B cell (primary cell): ENCODE measurements at regions of chr1 and their contacts with region 1.

Region 1: DNA sequence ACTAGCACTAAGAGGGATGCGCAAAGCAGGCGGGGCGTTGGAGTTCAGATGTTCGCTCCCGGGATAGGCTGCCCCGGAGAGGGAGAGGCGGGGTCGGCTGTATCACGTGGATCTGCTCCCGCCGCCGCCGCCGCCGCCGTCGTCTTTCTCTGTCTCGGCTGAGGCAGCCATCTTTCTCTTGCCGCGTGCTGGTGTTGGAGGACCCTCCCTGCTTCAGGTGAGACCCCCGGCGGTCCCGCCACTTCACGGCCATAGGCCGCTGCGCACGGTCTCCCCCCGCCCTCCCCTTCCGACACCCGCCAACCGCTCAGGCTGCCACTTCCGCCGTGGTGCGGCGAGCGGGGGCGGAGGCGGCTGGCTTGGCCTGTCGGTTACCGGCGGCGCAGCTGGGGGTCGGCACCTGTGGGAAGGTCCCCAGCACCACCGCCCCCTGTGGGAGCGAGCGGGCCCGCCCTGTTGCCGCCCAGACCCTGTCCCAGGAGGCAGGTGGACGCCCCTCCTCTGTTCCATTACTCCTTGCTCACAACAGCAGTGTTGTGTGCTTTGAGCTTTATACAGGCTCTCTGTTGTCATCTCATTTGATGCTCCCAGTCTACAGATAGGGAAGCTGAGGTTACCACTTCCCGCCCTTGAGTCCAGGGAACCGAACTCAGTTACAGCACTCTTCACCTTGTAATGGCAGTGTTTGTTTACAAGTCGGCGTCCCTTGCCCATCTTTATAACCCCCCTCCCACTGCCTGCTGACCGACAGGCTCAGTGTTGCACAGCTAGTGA is at the start of gene BTF3L4:
- DNase-seq: peak; percentile 93
- ATAC-seq: peak; percentile 89
- H3K4me3 ChIP-seq: peak within 1 kb of the TSS; percentile 73 to 99 (median 95)
- H3K4me3 Mint-ChIP-seq: peak within 1 kb of the TSS; percentile 98
- H3K27ac ChIP-seq: peak within 1 kb of the TSS; percentile 85 to 92
- H3K27ac Mint-ChIP-seq: peak within 1 kb of the TSS; percentile 97
- H3K4me1 ChIP-seq: peaks cover 25 to 31% of the 10 kb centered on the region in 2 donors
- H3K4me1 Mint-ChIP-seq: peaks cover 53% of the 10 kb centered on the region
- H3K27me3 ChIP-seq: no peaks in the 10 kb centered on the region
- H3K27me3 Mint-ChIP-seq: no peaks in the 10 kb centered on the region
- CTCF ChIP-seq: peak; percentile 17
- total RNA-seq, gene BTF3L4: 32.7 and 33.8 TPM in 2 replicates

Region 2: GRCh38 chr1:50978144-50978851 is 1078.1 kb before region 1 on chr1:
- CTCF ChIA-PET with region 1: no interaction called
- POLR2A ChIA-PET with region 1: no interaction called
- intact Hi-C with region 1: loop called (anchors 5 kb)
- DNase-seq: peak; percentile 67
- ATAC-seq: peak; percentile 54
- H3K4me3 ChIP-seq: peak overlapping the region; percentile 21 to 76 (median 62)
- H3K4me3 Mint-ChIP-seq: peak overlapping the region; percentile 85
- H3K27ac ChIP-seq: no peak overlapping the region
- H3K27ac Mint-ChIP-seq: peak overlapping the region; percentile 26
- H3K4me1 ChIP-seq: peaks cover 25 to 31% of the 10 kb centered on the region in 2 donors
- H3K4me1 Mint-ChIP-seq: peaks cover 20% of the 10 kb centered on the region
- H3K27me3 ChIP-seq: peaks cover 0 to 44% (median 36%) of the 10 kb centered on the region in 4 experiments
- H3K27me3 Mint-ChIP-seq: peaks cover 27% of the 10 kb centered on the region
- CTCF ChIP-seq: no peak

Region 3: DNA sequence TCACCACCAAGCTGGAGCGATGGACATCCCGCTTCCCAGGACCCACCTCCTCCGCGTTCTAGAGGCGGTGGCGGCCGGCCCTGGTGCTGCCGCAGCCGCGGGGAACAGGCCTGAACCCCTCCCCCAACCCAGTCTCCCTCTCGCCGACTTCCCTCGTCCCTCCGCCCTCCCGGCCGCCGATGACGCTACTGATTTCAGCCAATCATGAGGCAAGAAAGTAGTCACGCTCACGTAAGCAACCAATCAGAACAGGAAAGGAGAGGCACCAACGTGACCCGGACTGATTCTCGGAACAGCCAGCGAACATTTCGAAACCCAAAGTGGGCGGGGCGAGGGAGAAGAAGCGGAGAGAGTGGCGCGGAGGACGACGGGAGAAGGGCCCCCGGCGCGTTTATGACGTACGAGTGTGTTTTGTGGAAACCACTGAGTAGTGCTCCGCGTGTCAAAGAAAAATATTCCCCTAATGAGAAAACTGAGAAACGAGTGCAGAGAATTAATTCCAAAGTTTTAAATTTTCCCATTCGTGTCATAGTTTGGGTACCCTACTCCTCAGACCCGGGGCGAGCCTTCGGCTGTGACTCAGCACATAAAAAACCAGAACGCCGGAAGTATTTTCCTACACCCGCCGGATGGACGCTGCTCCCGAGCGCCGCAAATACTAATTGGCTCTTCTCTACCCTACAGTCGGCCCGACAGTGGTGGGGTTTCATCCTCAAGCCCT is 177.6 kb before region 1 on chr1 and contains the start of gene NRDC:
- CTCF ChIA-PET with region 1: no interaction called
- POLR2A ChIA-PET with region 1: no interaction called
- intact Hi-C with region 1: loop called (anchors 1 kb)
- DNase-seq: peak; percentile 100
- ATAC-seq: peak; percentile 89
- H3K4me3 ChIP-seq: peak within 1 kb of the TSS; percentile 65 to 99 (median 95)
- H3K4me3 Mint-ChIP-seq: no peak within 1 kb of the TSS
- H3K27ac ChIP-seq: peak within 1 kb of the TSS; percentile 84 to 98
- H3K27ac Mint-ChIP-seq: no peak within 1 kb of the TSS
- H3K4me1 ChIP-seq: peaks cover 25 to 42% of the 10 kb centered on the region in 2 donors
- H3K4me1 Mint-ChIP-seq: peaks cover 31% of the 10 kb centered on the region
- H3K27me3 ChIP-seq: no peaks in the 10 kb centered on the region
- H3K27me3 Mint-ChIP-seq: peaks cover 4% of the 10 kb centered on the region
- CTCF ChIP-seq: no peak
- total RNA-seq, gene NRDC: 154 and 167 TPM in 2 replicates

Region 4: DNA sequence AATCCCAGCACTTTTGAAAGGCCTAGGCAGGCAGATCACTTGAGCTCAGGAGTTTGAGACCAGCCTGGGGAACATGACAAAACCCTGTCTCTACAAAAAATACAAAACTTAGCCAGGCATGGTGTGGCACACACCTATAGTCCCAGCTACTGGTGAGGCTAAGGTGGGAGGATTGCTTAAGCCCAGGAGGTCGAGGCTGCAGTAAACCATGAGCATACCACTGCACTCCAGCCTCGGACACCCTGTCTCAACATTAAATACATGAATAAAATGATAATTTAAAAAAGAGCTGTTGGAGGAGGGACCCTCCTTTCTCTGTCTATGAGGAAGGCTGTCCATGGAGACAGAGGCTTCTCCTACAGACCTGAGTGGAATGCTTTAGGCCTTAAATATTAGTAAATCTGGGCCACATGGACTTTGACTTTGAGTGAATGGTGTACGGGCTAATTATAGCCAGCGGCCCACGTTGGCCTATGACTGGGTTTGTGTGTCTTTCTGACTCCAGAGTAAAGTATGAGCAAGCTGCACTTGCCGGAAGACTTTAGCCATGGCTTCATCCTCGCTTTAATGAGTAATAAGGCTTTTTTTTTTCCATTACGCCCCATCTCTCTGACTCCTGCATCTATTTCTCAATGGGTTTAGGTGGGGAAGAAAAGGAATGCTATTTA is 87.2 kb before region 1 on chr1:
- CTCF ChIA-PET with region 1: no interaction called
- POLR2A ChIA-PET with region 1: no interaction called
- intact Hi-C with region 1: no loop called
- DNase-seq: no peak
- ATAC-seq: no peak
- H3K4me3 ChIP-seq: no peak overlapping the region
- H3K4me3 Mint-ChIP-seq: no peak overlapping the region
- H3K27ac ChIP-seq: no peak overlapping the region
- H3K27ac Mint-ChIP-seq: no peak overlapping the region
- H3K4me1 ChIP-seq: no peaks in the 10 kb centered on the region
- H3K4me1 Mint-ChIP-seq: no peaks in the 10 kb centered on the region
- H3K27me3 ChIP-seq: peaks cover 0 to 3% (median 0%) of the 10 kb centered on the region in 4 experiments
- H3K27me3 Mint-ChIP-seq: peaks cover 13% of the 10 kb centered on the region
- CTCF ChIP-seq: no peak

Region 5: DNA sequence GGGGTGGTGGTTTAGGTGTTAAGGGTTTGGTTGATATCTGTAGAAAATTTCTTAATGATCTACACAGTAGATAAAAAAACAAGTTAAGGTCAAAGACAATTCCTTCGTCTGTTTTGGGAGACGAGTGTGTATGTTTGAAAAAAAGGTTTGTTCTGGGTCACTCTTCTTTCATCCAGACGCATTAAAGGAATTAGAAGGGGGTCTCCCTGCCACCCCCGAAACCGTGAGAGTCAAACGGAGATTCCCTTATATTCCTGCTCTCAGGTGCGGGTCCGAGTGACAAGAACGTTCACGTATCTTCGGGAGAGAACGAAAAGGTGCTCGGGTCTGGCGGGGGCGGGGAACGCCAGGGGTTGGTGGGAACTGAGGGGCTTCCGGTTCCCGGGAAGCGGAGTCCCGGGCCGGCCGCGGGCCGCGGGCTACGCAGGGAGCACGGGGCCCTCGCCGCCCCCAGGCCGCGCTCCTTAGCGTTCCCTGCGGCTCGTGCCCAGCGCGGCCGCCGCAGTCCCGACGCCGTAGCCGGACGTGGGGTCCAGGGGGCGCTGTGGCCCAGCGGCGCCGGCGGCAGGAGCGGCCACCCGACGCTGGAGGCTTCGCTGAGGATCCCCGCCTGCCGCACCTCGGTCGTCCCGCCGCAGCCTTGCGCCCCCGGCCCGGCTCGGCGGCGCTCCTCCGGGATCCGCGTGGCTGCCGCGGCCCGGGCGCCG is 85.3 kb after region 1 on chr1 and contains the start of gene ZFYVE9:
- CTCF ChIA-PET with region 1: no interaction called
- POLR2A ChIA-PET with region 1: no interaction called
- intact Hi-C with region 1: loop called (anchors 5 kb)
- DNase-seq: peak; percentile 85
- ATAC-seq: peak; percentile 85
- H3K4me3 ChIP-seq: peak within 1 kb of the TSS; percentile 30 to 80 (median 61)
- H3K4me3 Mint-ChIP-seq: peak within 1 kb of the TSS; percentile 86
- H3K27ac ChIP-seq: peak within 1 kb of the TSS in 1 of 2 donors; percentile 51
- H3K27ac Mint-ChIP-seq: peak within 1 kb of the TSS; percentile 43
- H3K4me1 ChIP-seq: peaks cover 14 to 18% of the 10 kb centered on the region in 2 donors
- H3K4me1 Mint-ChIP-seq: peaks cover 27% of the 10 kb centered on the region
- H3K27me3 ChIP-seq: peaks cover 0 to 34% (median 29%) of the 10 kb centered on the region in 4 experiments
- H3K27me3 Mint-ChIP-seq: peaks cover 39% of the 10 kb centered on the region
- CTCF ChIP-seq: peak; percentile 83
- total RNA-seq, gene ZFYVE9: 3.3 and 3.4 TPM in 2 replicates

Region 6: DNA sequence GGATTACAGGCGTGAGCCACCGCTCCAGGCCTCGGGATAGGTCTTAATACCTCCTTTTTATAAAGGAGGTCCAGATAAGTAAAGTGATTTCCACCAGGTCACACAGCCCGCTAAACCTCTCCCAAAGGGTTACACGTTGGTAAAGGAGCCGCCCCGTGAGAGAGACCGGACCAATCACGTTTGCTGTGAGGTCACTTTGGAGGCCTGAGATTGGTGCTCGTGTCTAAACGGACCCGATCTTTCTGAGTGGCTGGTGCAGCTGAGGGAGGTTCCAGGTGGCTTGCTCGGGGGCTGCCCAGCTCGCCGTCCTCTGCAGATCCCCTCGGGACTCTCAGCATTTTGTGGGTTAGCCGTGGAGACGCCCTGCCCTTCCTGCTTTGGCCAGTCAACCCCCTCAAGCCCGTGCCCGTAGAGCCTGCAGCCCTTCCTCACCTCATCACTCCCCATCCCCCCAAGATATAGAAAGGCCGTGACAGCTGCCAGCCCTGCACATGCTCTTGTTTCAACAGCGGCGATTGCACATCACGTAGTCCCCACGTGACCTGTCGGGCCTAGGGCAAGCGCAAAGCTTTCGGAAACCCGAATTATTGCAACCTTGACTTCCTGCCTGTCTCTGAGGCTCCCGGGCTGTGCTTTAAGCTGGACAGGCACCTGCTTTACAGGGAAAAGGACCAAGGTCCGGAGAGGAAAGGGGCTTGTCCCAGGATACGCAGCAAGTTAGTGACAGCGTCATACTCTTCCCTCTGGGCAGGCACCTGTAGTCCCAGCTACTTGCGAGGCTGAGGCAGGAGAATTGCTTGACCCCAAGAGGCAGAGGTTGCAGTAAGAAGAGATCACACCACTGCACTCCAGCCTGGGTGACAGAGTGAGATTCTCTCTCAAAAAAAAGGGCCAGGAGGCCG is 646.8 kb after region 1 on chr1:
- CTCF ChIA-PET with region 1: interaction called, 3 read pairs
- POLR2A ChIA-PET with region 1: no interaction called
- intact Hi-C with region 1: loop called (anchors 5 kb)
- DNase-seq: peak; percentile 93
- ATAC-seq: peak; percentile 86
- H3K4me3 ChIP-seq: peak overlapping the region in 4 of 5 experiments; percentile 37 to 57 (median 49)
- H3K4me3 Mint-ChIP-seq: peak overlapping the region; percentile 90
- H3K27ac ChIP-seq: peak overlapping the region; percentile 83 to 88
- H3K27ac Mint-ChIP-seq: peak overlapping the region; percentile 97
- H3K4me1 ChIP-seq: peaks cover 8 to 21% of the 10 kb centered on the region in 2 donors
- H3K4me1 Mint-ChIP-seq: peaks cover 24% of the 10 kb centered on the region
- H3K27me3 ChIP-seq: no peaks in the 10 kb centered on the region
- H3K27me3 Mint-ChIP-seq: peaks cover under 1% of the 10 kb centered on the region
- CTCF ChIP-seq: no peak

Region 7: GRCh38 chr1:53196485-53197270 is 1140.3 kb after region 1 on chr1 and contains the start of gene CPT2:
- CTCF ChIA-PET with region 1: no interaction called
- POLR2A ChIA-PET with region 1: no interaction called
- intact Hi-C with region 1: loop called (anchors 2 kb)
- DNase-seq: peak; percentile 88
- ATAC-seq: peak; percentile 99
- H3K4me3 ChIP-seq: peak within 1 kb of the TSS; percentile 72 to 91 (median 76)
- H3K4me3 Mint-ChIP-seq: peak within 1 kb of the TSS; percentile 97
- H3K27ac ChIP-seq: peak within 1 kb of the TSS; percentile 81 to 96
- H3K27ac Mint-ChIP-seq: peak within 1 kb of the TSS; percentile 95
- H3K4me1 ChIP-seq: peaks cover 16 to 20% of the 10 kb centered on the region in 2 donors
- H3K4me1 Mint-ChIP-seq: peaks cover 28% of the 10 kb centered on the region
- H3K27me3 ChIP-seq: no peaks in the 10 kb centered on the region
- H3K27me3 Mint-ChIP-seq: no peaks in the 10 kb centered on the region
- CTCF ChIP-seq: no peak
- total RNA-seq, gene CPT2: 16.7 and 19.8 TPM in 2 replicates